Activated naive CD4-positive, alpha-beta T cell treated with anti-CD3 and anti-CD28 coated beads, Interleukin-2, amount 10 ng/mL, durations not matched to agents 7 days and 5 days (primary cell): ENCODE measurements at regions of chr3 and their contacts with region 1.

Region 1: DNA sequence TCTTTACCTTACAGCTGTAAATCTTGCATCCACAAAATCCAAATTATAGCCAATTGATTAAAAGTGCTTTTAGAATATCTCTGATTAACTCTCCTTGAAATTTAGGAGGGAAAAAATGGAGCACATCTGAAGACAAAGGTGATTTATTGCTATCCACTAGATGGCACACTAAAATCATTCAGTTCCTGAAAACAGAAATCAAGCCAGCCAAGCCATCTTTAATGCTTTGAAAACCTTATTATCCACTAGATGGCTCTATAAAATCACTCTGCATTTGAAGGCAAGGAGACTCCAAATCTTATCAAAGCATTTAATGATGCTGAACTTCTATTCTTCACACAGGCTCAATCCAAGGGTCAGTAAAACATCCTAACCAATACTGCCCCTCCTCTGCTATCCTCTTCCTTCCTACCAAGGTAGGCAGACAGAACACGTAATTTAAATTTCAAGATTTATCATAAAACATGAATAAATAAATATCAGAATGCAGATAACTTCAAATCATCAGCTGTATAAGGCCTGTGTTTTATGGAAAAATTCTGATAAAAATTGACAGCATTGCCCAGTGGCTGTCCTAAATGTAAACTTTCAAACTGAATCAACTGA is 48.4 kb downstream of the GOLIM4 start:
- DNase-seq: no peak
- H3K4me3 Mint-ChIP-seq: no peak overlapping the region
- H3K27ac Mint-ChIP-seq: no peak overlapping the region
- H3K4me1 Mint-ChIP-seq: no peaks in the 10 kb centered on the region
- H3K27me3 Mint-ChIP-seq: no peaks in the 10 kb centered on the region

Region 2: GRCh38 chr3:168002786-168003368 is 44.4 kb before region 1 on chr3:
- CTCF ChIA-PET with region 1: no interaction called
- DNase-seq: no peak
- H3K4me3 Mint-ChIP-seq: no peak overlapping the region
- H3K27ac Mint-ChIP-seq: no peak overlapping the region
- H3K4me1 Mint-ChIP-seq: no peaks in the 10 kb centered on the region
- H3K27me3 Mint-ChIP-seq: no peaks in the 10 kb centered on the region

Region 3: GRCh38 chr3:168165390-168166269 is 118.3 kb after region 1 on chr3:
- CTCF ChIA-PET with region 1: interaction called, 47 read pairs
- DNase-seq: peak; percentile 35
- H3K4me3 Mint-ChIP-seq: no peak overlapping the region
- H3K27ac Mint-ChIP-seq: no peak overlapping the region
- H3K4me1 Mint-ChIP-seq: no peaks in the 10 kb centered on the region
- H3K27me3 Mint-ChIP-seq: no peaks in the 10 kb centered on the region